ENCODE measurements at regions of chr1 and their contacts with region 1.

Region 1: GRCh38 chr1:26321315-26322041 is 3.7 kb downstream of the CD52 start:
- DNase-seq: peak; percentile 76
- H3K4me3 ChIP-seq: no peak overlapping the region
- H3K27ac ChIP-seq: no peak overlapping the region
- H3K4me1 ChIP-seq: peaks cover 9% of the 10 kb centered on the region
- H3K27me3 ChIP-seq: no peaks in the 10 kb centered on the region
- CTCF ChIP-seq: peak; percentile 78 to 91

Region 2: GRCh38 chr1:26284597-26285360 is 36.7 kb before region 1 on chr1:
- CTCF ChIA-PET with region 1: no interaction called
- dilution Hi-C with region 1: no loop called
- in situ Hi-C with region 1: loop called in 1 of 2 experiments (anchors 5 kb)
- intact Hi-C with region 1: loop called (anchors 1 kb)
- DNase-seq: peak; percentile 87
- H3K4me3 ChIP-seq: no peak overlapping the region
- H3K27ac ChIP-seq: peak overlapping the region; percentile 21
- H3K4me1 ChIP-seq: peaks cover 48% of the 10 kb centered on the region
- H3K27me3 ChIP-seq: no peaks in the 10 kb centered on the region
- CTCF ChIP-seq: peak; percentile 45 to 75

Region 3: DNA sequence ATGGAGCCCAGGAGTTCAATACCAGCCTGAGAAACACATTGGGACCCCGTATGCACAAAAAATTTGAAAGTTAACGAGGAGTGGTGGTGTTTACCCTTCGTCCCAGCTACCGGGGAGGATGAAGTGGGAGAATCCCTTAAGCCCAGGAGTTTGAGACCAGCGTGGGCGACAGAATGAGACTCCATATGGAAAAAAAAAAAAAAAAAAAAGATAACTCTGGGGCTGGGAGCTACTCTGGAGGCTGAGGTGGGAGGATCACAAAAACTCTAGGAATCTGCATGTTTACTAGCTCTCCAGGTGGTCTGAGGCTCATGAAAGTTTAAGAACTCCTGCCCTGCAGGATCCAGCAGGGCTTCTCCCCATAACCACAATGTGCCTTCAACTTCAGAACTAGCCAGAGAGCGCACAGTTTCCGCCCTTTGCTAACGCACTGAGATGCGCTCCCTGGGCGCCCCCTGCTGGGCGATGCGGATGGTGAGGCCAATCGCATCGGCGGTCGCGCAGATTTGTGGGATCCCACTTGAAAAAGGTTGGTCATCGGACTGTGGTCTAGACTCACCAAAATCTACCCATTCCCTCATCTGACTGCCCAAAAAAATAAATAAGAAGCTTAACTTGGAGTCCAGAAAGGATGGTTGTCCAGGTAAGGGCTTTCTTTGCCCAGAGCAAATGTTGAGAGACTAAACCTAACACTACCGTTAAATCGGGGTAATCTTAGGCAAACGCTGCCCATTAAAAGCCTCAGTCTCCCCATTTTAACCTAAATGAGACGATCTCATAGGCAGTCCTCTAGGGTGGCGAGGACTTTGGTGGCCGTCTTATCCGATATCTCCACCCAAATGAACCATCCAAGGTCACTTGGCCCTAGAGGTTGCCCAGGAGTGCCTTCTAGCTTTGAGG is 42.3 kb after region 1 on chr1:
- CTCF ChIA-PET with region 1: no interaction called
- dilution Hi-C with region 1: no loop called
- in situ Hi-C with region 1: no loop called
- intact Hi-C with region 1: loop called (anchors 5 kb)
- DNase-seq: peak; percentile 56
- H3K4me3 ChIP-seq: no peak overlapping the region
- H3K27ac ChIP-seq: no peak overlapping the region
- H3K4me1 ChIP-seq: peaks cover 14% of the 10 kb centered on the region
- H3K27me3 ChIP-seq: no peaks in the 10 kb centered on the region
- CTCF ChIP-seq: peak; percentile 94 to 98